SK-N-SH (cell line): ENCODE measurements at regions of chr1 and their contacts with region 1.

Region 1: DNA sequence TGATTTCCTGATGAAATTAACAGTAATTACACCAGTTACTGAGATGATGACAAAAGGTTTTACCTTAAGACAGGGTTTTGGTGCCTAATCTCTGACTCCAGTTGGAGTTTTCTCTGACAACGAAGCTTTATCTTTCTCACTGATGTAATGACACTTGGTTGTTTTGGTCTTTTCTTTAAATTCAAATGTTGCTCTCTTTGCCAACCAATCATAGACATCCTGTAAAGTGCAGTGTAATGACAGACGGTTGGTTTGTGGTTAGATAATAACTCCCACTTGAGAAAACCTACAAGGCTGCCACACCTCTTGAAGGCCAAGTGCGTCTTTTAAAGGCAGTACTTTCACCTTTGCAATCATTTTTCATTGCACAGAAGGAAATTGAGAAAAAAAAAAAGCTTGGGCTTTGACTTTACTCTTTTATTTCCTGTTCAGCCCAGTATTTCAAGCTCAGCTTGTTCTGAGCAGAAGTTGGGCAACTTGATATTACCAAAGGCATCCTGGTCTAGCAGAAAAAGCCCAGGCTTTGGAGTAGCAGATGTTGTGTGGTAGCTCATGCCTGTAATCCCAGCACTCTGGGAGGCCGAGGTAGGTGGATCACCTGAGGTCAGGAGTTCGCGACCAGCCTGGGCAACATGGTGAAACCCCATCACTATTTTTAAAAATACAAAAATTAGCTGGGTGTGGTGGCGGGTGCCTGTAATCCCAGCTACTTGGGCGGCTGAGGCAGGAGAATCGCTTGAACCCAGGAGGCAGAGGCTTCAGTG is 14.9 kb downstream of the PDIK1L start:
- DNase-seq: no peak
- H3K4me3 ChIP-seq: no peak overlapping the region
- H3K27ac ChIP-seq: no peak overlapping the region
- H3K4me1 ChIP-seq: peaks cover 4 to 8% of the 10 kb centered on the region in 2 experiments; a peak in 3 of 4 replicates
- H3K27me3 ChIP-seq: no peaks in the 10 kb centered on the region
- CTCF ChIP-seq: no peak
- EP300 ChIP-seq: no peak
- RAD21 ChIP-seq: no peak

Region 2: DNA sequence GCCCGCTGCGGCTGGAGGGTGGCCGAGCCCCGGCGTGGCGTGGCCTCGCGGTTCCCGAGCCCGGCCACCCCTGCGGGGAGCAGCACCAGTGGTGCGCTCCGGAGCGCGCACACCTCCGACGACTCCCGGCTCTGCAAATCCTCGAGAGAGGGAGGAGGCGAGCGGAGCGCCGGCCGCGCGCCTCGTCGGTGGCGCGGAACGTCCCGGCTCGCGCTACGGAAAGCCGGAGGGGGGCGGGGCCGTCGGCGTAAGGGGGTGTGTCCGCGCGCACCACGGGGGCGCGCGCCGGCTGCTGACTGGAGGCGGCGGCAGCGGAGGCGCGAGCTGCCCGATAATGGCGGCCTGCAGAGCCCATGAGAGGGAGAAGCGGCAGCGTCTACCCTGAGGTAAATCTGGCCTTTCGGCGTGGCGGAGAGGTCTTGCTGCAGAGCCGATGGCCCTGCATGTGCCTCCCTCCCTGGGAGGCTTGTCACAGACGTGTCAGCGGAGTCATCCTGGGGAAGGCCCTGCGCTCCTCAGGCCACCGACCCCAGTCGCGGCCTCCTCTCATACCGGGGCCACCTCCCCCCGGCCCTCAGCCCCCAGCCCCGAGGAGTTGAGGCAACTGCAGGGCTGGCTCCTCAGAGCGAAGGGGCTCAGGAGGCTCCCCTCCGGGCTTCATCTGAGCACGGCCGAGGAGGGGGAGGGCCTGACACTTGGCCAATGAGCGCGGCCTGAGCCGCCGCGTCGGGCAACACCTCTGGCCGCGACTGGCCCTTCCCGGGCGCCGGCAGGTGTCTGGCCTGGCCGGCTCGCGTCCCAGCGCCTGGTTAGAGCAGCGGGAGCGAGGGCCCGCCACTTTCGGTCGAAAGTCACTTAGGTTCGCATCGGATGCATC is 14.7 kb before region 1 on chr1 and contains the start of gene PDIK1L:
- CTCF ChIA-PET with region 1: interaction called, 10 read pairs
- POLR2A ChIA-PET with region 1: interaction called, 6 read pairs
- DNase-seq: peak; percentile 96
- H3K4me3 ChIP-seq: peak within 1 kb of the TSS; percentile 94 to 99
- H3K27ac ChIP-seq: peak within 1 kb of the TSS; percentile 72 to 94
- H3K4me1 ChIP-seq: peaks cover 5 to 13% of the 10 kb centered on the region in 2 experiments
- H3K27me3 ChIP-seq: no peaks in the 10 kb centered on the region
- CTCF ChIP-seq: no peak
- EP300 ChIP-seq: peak in 1 of 2 experiments; percentile 1; a peak in 1 of 4 replicates
- RAD21 ChIP-seq: no peak
- polyA plus RNA-seq, gene PDIK1L: 1.2 and 1.3 TPM in 2 replicates

Region 3: DNA sequence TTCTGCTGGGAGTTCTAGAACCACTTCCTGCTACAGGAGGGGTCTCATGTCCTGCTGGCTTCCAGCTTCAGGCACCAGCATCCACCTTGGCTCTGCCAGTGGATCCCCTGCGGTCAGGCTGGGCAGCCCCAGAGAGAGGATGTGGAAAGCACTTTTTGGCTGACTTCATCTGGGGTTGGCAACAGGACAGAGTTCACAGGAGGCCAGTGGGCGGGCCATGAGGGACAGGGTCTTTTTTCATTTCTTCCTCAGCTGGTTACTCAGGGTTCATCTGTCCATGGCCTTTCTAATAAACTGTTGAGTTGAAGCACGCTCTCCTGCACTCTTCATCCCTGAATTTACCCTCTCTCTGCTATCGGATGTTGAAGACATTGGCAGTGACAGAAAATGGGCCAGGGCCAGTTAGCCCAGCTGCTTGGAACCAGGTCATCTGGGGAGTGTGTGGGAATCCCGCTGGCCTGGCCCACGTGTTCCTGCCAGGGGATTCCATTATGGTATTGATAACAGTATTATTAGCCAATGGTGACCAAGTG is 448.3 kb after region 1 on chr1:
- CTCF ChIA-PET with region 1: no interaction called
- POLR2A ChIA-PET with region 1: no interaction called
- DNase-seq: no peak
- H3K4me3 ChIP-seq: no peak overlapping the region
- H3K27ac ChIP-seq: no peak overlapping the region
- H3K4me1 ChIP-seq: no peaks in the 10 kb centered on the region
- H3K27me3 ChIP-seq: no peaks in the 10 kb centered on the region
- CTCF ChIP-seq: no peak
- EP300 ChIP-seq: no peak
- RAD21 ChIP-seq: no peak